ENCODE measurements at regions of chr9 and their contacts with region 1.

Region 1: GRCh38 chr9:35089434-35089833 is 7.0 kb downstream of the PIGO start:
- DNase-seq: no peak
- H3K4me3 ChIP-seq: no peak overlapping the region
- H3K27ac ChIP-seq: no peak overlapping the region
- H3K4me1 ChIP-seq: no peaks in the 10 kb centered on the region
- H3K27me3 ChIP-seq: no peaks in the 10 kb centered on the region
- CTCF ChIP-seq: no peak

Region 2: DNA sequence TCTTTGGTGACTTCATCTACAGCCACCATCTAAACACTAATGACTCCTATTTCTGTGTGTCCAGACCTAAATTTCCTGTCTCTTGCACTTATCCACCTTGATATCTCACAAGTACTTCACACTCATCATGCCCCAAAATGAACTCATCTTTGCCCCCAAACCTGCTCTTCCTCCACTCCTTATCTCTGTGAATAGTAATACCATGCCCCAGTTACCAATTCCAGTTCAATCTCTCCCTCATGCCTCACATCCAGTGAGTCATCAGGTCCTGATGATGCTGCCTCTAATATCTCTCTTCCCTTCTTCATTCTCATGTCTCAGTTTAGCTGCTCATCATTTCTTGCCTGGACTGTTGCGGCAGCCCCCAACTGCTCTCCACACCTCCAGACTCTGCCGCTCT is 114.8 kb before region 1 on chr9:
- CTCF ChIA-PET with region 1: no interaction called
- POLR2A ChIA-PET with region 1: interaction called, 20 read pairs
- intact Hi-C with region 1: no loop called
- DNase-seq: no peak
- H3K4me3 ChIP-seq: no peak overlapping the region
- H3K27ac ChIP-seq: no peak overlapping the region
- H3K4me1 ChIP-seq: no peaks in the 10 kb centered on the region
- H3K27me3 ChIP-seq: no peaks in the 10 kb centered on the region
- CTCF ChIP-seq: no peak